Aorta (tissue), 5 donors: ENCODE measurements at regions of chr2 and their contacts with region 1.

Region 1: GRCh38 chr2:101151141-101151858 is at the start of gene TBC1D8:
- DNase-seq: peak; percentile 93 to 95
- ATAC-seq: peak; percentile 94
- H3K4me3 ChIP-seq: peak within 1 kb of the TSS; percentile 62 to 90
- H3K27ac ChIP-seq: peak within 1 kb of the TSS in 1 of 2 donors; percentile 85
- H3K4me1 ChIP-seq: peaks cover 0 to 4% of the 10 kb centered on the region in 2 donors
- H3K27me3 ChIP-seq: no peaks in the 10 kb centered on the region
- total RNA-seq, gene TBC1D8: 21.9 to 24.9 TPM

Region 2: GRCh38 chr2:100359576-100359975 is 791.7 kb before region 1 on chr2:
- intact Hi-C with region 1: no loop called
- DNase-seq: no peak
- ATAC-seq: no peak
- H3K4me3 ChIP-seq: no peak overlapping the region
- H3K27ac ChIP-seq: no peak overlapping the region
- H3K4me1 ChIP-seq: no peaks in the 10 kb centered on the region
- H3K27me3 ChIP-seq: no peaks in the 10 kb centered on the region

Region 3: GRCh38 chr2:101012706-101013181 is 138.6 kb before region 1 on chr2:
- intact Hi-C with region 1: loop called (anchors 1 to 5 kb)
- DNase-seq: no peak
- ATAC-seq: peak; percentile 56
- H3K4me3 ChIP-seq: no peak overlapping the region
- H3K27ac ChIP-seq: no peak overlapping the region
- H3K4me1 ChIP-seq: no peaks in the 10 kb centered on the region
- H3K27me3 ChIP-seq: no peaks in the 10 kb centered on the region

Region 4: GRCh38 chr2:101026253-101026701 is 125.0 kb before region 1 on chr2:
- intact Hi-C with region 1: no loop called
- DNase-seq: no peak
- ATAC-seq: no peak
- H3K4me3 ChIP-seq: no peak overlapping the region
- H3K27ac ChIP-seq: no peak overlapping the region
- H3K4me1 ChIP-seq: no peaks in the 10 kb centered on the region
- H3K27me3 ChIP-seq: no peaks in the 10 kb centered on the region

Region 5: DNA sequence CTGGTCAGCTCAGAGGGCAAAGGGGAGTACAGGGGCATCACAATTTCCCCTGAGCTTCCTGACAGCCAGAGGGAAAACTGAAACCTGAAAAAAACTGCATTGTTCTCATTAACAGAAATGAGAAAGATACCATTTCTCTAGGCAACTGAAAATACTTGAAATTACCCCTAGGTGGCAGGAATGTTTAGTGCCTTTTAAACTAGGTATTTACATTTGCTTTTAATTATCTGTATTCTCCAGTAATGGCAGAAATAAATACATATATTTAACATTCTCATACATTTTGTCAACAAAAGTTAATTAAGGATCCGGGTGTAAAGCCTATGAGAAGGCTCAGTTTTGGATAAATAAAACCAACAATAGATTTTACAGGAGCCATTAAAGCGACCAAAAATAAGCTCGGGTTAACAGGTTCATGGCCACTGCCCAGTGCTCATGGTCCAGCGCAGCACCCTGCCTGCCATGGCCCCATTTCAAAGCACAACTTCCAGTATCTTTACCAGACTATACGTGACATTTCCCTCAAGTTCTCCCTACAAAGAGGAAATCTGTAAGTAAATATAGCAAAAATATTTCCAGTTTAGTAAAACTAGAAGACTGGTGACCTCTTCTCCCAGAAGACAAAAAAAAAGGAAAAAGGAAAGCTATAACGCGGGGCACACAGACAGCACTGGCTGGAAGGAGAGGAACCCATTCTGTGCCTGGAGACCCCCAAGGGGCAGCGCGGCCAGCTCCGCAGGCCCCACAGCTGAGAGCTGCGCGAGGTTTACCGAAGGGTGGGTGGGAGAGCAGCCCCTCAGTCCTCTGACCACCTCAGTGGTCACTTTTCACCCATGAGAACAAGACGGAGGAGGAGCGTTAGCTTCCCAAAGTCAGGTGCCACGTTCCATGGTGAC is 114.5 kb before region 1 on chr2:
- intact Hi-C with region 1: loop called (anchors 1 to 5 kb)
- DNase-seq: no peak
- ATAC-seq: no peak
- H3K4me3 ChIP-seq: no peak overlapping the region
- H3K27ac ChIP-seq: no peak overlapping the region
- H3K4me1 ChIP-seq: no peaks in the 10 kb centered on the region
- H3K27me3 ChIP-seq: no peaks in the 10 kb centered on the region

Region 6: GRCh38 chr2:101205521-101205998 is 54.3 kb after region 1 on chr2:
- intact Hi-C with region 1: loop called in 1 of 2 experiments (anchors 5 kb)
- DNase-seq: peak in 1 of 2 donors; percentile 68
- ATAC-seq: peak; percentile 90
- H3K4me3 ChIP-seq: no peak overlapping the region
- H3K27ac ChIP-seq: no peak overlapping the region
- H3K4me1 ChIP-seq: no peaks in the 10 kb centered on the region
- H3K27me3 ChIP-seq: no peaks in the 10 kb centered on the region

Region 7: DNA sequence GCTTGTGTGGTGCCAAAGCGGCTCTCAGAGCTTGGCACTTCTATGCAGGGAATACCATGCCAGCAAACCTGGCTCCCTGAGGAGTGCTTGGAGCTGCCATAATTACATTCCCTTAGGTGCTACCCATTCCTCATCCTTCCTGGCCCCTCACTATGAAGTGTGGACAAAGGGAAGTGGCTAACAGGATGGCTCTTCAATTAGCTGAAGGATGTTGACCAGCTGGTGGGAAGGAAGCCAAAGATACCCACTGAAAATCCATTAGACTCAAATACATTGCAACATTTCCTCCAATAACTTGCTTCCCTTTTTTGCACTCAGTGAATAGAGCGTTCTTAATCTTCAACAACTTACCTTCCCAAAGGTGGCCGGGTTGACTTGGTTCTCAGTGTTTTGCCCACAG is 315.1 kb after region 1 on chr2:
- intact Hi-C with region 1: no loop called
- DNase-seq: no peak
- ATAC-seq: no peak
- H3K4me3 ChIP-seq: no peak overlapping the region
- H3K27ac ChIP-seq: no peak overlapping the region
- H3K4me1 ChIP-seq: no peaks in the 10 kb centered on the region
- H3K27me3 ChIP-seq: no peaks in the 10 kb centered on the region